ENCODE measurements at regions of chr15 and their contacts with region 1.

Region 1: DNA sequence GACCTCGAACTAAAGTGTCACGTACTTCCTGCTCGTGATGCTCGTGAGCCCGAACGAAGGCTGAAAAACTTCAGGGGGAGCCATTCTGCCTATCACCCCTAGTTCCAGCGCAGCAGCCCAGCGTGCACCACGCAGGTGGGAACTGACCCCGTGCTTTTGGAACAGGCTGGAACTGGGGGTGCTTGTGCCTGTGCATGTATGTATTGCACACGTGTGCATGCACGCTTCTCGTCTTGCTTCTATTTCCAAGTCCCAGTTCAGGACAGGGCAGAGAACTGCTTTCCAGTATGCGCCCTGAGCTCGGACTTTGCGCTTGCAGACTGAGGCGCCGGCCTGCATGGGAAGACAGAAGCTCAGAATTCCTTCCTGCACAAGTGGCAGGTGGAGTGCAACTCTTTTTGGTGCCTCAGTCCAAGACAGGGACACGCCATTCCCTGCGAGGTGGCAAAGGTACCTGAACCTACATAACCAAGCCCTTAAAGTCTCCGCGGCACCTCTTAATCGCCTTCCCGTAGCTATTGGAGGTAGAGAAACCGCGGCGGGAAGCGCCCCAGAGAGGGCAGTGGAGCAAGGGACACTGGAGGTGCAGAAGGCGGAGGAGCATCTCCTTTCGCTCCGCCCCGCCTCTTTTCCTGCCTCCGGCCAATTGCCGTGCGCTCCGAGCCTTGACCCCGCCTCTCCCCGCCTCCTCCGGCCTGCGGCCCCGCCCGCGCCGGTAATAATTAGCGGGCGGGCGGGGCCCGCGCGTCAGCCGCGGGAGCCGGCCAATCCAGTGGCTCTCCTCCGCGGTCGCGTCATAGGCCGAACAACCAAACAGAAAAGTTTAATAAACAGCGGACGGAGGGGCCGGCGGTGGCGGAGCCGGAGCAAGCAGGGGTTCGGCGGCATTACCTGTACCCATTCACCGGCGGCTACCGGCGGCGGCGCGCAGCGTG is at the start of gene ZFAND6:
- DNase-seq: peak; percentile 92 to 96 (median 94)
- ATAC-seq: peak; percentile 88
- H3K4me3 ChIP-seq: peak within 1 kb of the TSS; percentile 85
- H3K27ac ChIP-seq: peak within 1 kb of the TSS; percentile 95
- H3K4me1 ChIP-seq: peaks cover 8 to 9% of the 10 kb centered on the region in 2 experiments; a peak in 4 of 5 replicates
- H3K27me3 ChIP-seq: no peaks in the 10 kb centered on the region
- CTCF ChIP-seq: peak in 1 of 3 experiments; percentile 32; a peak in 2 of 6 replicates
- EP300 ChIP-seq: no peak
- POLR2A ChIP-seq: peak; percentile 68
- RAD21 ChIP-seq: peak in 1 of 2 experiments; percentile 23; a peak in 1 of 4 replicates
- polyA plus RNA-seq, gene ZFAND6: 82.1 to 93.8 TPM

Region 2: DNA sequence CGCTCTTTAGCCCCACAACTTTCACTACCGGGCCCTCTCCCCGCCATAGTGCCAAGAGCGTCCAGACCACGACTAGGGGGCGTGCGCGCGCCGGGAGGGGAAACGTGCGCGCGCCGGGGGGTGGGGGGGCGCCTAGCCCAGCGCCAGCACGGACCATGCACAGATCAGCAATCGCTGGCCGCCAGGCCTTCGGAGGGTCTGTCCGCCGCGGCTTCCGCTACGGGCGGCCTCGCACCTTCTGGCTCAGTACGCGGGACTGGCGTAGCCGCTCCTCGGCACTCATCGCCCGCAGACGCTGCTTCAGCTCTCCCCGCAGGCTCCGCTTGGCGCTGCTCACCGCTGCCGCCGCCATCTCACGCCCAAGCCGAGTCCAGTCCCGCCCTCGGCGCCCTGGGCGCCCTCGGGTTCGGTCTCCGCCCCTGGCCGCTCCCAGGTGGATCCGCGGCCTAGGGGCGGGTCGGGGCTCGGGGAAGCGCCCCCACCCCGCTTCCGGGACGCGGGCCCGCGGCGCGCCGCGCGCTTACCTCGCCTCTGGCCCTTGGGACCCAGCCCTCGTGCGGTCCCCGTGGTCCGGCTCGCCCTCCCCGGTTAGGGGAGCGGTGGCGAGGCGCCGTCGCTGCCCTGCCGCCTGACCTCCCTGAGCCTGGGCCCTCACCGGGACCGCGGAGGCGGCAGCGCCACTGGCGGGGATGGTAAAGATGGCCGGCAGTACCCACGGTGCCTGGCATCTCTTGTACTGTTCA is 162.3 kb before region 1 on chr15 and contains the start of gene MTHFS:
- CTCF ChIA-PET with region 1: no interaction called
- POLR2A ChIA-PET with region 1: interaction called, 3 read pairs
- in situ Hi-C with region 1: no loop called
- intact Hi-C with region 1: loop called (anchors 10 kb)
- DNase-seq: peak; percentile 89 to 93 (median 92)
- ATAC-seq: peak; percentile 98
- H3K4me3 ChIP-seq: peak within 1 kb of the TSS; percentile 69
- H3K27ac ChIP-seq: peak within 1 kb of the TSS; percentile 93
- H3K4me1 ChIP-seq: peaks cover 3 to 8% of the 10 kb centered on the region in 2 experiments
- H3K27me3 ChIP-seq: no peaks in the 10 kb centered on the region
- CTCF ChIP-seq: peak; percentile 41 to 60 (median 49); a peak in 5 of 6 replicates
- EP300 ChIP-seq: no peak
- POLR2A ChIP-seq: peak; percentile 97
- RAD21 ChIP-seq: peak; percentile 35 to 41
- polyA plus RNA-seq, gene MTHFS: 17.8 to 23.6 TPM

Region 3: GRCh38 chr15:80072285-80072994 is 13.3 kb after region 1 on chr15:
- CTCF ChIA-PET with region 1: interaction called, 3 read pairs
- POLR2A ChIA-PET with region 1: interaction called, 27 read pairs
- in situ Hi-C with region 1: no loop called
- intact Hi-C with region 1: no loop called
- DNase-seq: peak; percentile 56 to 88 (median 68)
- ATAC-seq: peak; percentile 89
- H3K4me3 ChIP-seq: peak overlapping the region; percentile 42
- H3K27ac ChIP-seq: peak overlapping the region; percentile 55; the same call in 2 of the 3 replicates
- H3K4me1 ChIP-seq: peaks cover 9 to 15% of the 10 kb centered on the region in 2 experiments; a peak in 4 of 5 replicates
- H3K27me3 ChIP-seq: no peaks in the 10 kb centered on the region
- CTCF ChIP-seq: no peak
- EP300 ChIP-seq: no peak
- POLR2A ChIP-seq: 0 out of 2 replicates have a peak, but pooled peaks have one; percentile 37
- RAD21 ChIP-seq: no peak; a peak in 1 of 4 replicates

Region 4: GRCh38 chr15:80152180-80152845 is 93.2 kb after region 1 on chr15:
- CTCF ChIA-PET with region 1: no interaction called
- POLR2A ChIA-PET with region 1: interaction called, 3 read pairs
- in situ Hi-C with region 1: no loop called
- intact Hi-C with region 1: loop called (anchors 2 kb)
- DNase-seq: peak; percentile 96 to 98 (median 97)
- ATAC-seq: peak; percentile 75
- H3K4me3 ChIP-seq: peak overlapping the region; percentile 47
- H3K27ac ChIP-seq: peak overlapping the region; percentile 68; the same call in 2 of the 3 replicates
- H3K4me1 ChIP-seq: peaks cover 32 to 47% of the 10 kb centered on the region in 2 experiments
- H3K27me3 ChIP-seq: no peaks in the 10 kb centered on the region
- CTCF ChIP-seq: no peak
- EP300 ChIP-seq: no peak
- POLR2A ChIP-seq: peak; percentile 60
- RAD21 ChIP-seq: no peak

Region 5: DNA sequence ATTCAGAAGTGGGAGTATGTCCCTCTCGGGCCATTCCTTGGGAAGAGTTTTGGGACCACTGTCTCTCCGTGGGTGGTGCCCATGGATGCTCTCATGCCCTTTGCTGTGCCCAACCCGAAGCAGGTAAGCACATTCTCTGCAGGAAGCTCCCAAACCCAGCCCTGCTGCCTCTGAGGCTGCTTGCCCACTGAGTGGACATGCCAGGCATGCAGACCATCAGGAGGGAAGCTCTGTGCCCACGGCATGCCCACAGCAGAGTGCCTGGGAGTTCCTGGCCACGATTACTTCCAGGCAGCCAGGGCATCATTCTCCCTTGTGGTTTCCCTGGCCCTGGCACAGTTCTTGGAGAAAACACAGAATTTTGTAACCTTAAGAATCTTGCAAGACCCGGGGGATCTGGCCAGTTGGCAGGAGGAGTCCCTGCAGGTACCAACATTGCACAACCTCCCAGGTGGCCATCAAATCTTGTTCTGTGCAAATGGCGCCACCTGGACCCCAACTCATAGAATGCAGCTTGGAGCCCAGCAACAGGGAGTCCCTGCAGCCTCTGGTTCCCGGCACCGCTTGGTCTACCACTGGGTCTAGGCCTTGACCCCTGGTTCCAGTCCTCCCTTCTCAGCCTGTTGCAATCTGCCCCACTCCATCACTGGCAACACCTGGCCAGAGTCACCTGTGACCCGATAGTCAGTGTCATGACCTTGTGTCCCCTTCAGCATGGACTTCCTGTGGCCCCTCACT is 114.1 kb after region 1 on chr15:
- CTCF ChIA-PET with region 1: interaction called, 3 read pairs
- POLR2A ChIA-PET with region 1: interaction called, 3 read pairs
- in situ Hi-C with region 1: no loop called
- intact Hi-C with region 1: loop called (anchors 5 kb)
- DNase-seq: peak; percentile 65 to 79 (median 72)
- ATAC-seq: peak; percentile 95
- H3K4me3 ChIP-seq: no peak overlapping the region
- H3K27ac ChIP-seq: no peak overlapping the region
- H3K4me1 ChIP-seq: peaks cover 0 to 3% of the 10 kb centered on the region in 2 experiments; a peak in 1 of 5 replicates
- H3K27me3 ChIP-seq: no peaks in the 10 kb centered on the region
- CTCF ChIP-seq: peak; percentile 84 to 88 (median 85)
- EP300 ChIP-seq: no peak
- POLR2A ChIP-seq: no peak
- RAD21 ChIP-seq: peak; percentile 88 to 93